ENCODE measurements at regions of chr4 and their contacts with region 1.

Region 1: GRCh38 chr4:102344954-102345794 is at the start of gene SLC39A8:
- DNase-seq: peak; percentile 96
- H3K4me3 ChIP-seq: peak within 1 kb of the TSS; percentile 68 to 83 (median 70)
- H3K27ac ChIP-seq: peak within 1 kb of the TSS; percentile 69 to 76 (median 74)
- H3K4me1 ChIP-seq: peaks cover 7 to 18% (median 12%) of the 10 kb centered on the region in 4 donors
- H3K27me3 ChIP-seq: no peaks in the 10 kb centered on the region
- CTCF ChIP-seq: peak; percentile 67 to 93 (median 72)
- EP300 ChIP-seq: no peak
- POLR2A ChIP-seq: no peak
- total RNA-seq, gene SLC39A8: 4.0 to 6.6 (median 6.0) TPM

Region 2: DNA sequence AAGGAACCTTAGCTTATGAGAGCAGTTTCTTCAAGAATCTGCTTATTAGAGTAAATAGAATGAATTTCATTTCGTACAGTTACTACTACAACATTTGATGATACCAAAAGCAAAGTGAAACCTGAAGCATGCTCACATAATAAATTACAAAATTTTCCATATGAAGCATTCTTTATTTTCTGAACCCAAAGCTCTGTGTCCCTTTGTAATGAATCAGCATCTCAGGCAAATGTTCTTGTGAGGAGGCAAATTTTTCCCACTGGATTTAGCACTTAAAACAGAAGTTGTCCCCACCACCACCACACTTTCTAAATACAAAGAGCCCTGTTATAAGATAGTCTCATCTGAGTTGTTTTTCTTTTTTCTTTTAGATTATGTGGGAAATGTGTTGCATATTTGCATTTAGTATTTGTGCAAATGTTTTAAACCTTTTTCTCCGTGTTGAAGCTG is 85.3 kb after region 1 on chr4:
- intact Hi-C with region 1: loop called (anchors 5 kb)
- DNase-seq: no peak
- H3K4me3 ChIP-seq: peak overlapping the region; percentile 57 to 75 (median 66)
- H3K27ac ChIP-seq: peak overlapping the region; percentile 35 to 77 (median 71)
- H3K4me1 ChIP-seq: peaks cover 0 to 5% (median 4%) of the 10 kb centered on the region in 4 donors
- H3K27me3 ChIP-seq: no peaks in the 10 kb centered on the region
- CTCF ChIP-seq: no peak
- EP300 ChIP-seq: no peak
- POLR2A ChIP-seq: no peak

Region 3: DNA sequence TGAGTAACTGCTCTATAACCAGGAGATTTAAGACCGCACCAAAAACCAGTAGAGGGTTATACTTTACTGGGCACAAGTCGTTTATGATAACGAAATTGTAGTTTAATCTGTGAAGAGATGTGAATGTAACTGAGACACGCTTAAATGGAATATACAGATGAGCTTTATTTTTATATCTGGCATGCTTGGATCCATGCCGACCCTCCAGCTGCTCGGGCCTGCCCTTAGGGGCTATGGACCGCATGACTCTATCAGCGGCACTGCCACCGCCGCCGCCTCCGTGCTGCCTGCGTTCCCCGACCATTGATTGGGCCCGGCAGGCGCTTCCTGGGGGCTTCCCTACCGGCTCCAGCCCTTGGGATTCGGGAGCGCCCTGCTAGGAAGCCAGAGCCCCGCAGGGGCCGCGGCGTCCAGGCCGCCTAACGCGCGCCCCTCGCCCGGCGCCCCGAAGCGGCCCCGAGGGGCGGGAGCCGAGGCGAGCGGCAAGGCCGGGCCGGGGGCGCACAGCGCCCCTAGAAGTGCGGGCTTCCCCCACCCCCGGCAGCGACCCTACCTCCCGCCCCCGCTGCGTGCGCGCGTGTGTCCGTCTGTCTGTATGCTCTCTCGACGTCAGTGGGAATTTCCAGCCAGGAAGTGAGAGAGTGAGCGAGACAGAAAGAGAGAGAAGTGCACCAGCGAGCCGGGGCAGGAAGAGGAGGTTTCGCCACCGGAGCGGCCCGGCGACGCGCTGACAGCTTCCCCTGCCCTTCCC is 155.7 kb after region 1 on chr4 and contains the start of gene NFKB1:
- intact Hi-C with region 1: loop called (anchors 10 kb)
- DNase-seq: no peak
- H3K4me3 ChIP-seq: peak within 1 kb of the TSS; percentile 78 to 94 (median 88)
- H3K27ac ChIP-seq: peak within 1 kb of the TSS; percentile 91 to 98 (median 98)
- H3K4me1 ChIP-seq: peaks cover 32 to 49% (median 47%) of the 10 kb centered on the region in 4 donors
- H3K27me3 ChIP-seq: no peaks in the 10 kb centered on the region
- CTCF ChIP-seq: no peak
- EP300 ChIP-seq: no peak
- POLR2A ChIP-seq: no peak
- total RNA-seq, gene NFKB1: 31.6 to 42.1 (median 39.7) TPM

Measured in esophagus muscularis mucosa (tissue), 4 donors.